ENCODE measurements at regions of chr10 and their contacts with region 1.

Region 1: DNA sequence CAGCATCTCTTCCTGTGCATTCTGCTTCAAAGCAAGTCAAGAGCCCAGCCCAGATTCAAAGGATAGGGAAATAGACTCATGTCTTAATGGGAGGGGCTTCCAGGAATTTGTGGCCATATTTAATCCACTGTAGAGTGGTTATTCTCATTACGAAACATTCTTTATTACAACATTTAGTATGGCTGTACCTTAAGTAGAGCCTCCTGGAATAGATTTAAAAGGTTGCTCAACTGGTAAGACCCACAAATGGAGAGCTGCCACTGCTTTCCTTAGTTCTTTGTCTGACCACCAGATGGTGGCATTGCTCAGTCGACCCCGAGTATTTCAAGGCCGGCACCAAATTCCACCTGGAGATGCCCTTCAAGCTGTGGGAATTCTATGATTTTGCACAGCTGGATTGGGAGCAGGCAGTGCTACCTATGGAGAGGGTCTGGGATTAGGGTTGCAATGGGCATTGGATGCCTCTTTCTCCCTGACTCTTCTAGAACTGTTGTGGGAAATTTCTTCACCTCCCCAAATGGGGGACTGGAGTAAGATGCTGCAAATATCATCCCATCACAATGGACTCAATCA is 102.2 kb downstream of the RBM20 start:
- DNase-seq: peak; percentile 61
- H3K4me3 Mint-ChIP-seq: no peak overlapping the region
- H3K27ac Mint-ChIP-seq: no peak overlapping the region
- H3K4me1 Mint-ChIP-seq: peaks cover 70% of the 10 kb centered on the region
- H3K27me3 Mint-ChIP-seq: peaks cover 4% of the 10 kb centered on the region

Region 2: DNA sequence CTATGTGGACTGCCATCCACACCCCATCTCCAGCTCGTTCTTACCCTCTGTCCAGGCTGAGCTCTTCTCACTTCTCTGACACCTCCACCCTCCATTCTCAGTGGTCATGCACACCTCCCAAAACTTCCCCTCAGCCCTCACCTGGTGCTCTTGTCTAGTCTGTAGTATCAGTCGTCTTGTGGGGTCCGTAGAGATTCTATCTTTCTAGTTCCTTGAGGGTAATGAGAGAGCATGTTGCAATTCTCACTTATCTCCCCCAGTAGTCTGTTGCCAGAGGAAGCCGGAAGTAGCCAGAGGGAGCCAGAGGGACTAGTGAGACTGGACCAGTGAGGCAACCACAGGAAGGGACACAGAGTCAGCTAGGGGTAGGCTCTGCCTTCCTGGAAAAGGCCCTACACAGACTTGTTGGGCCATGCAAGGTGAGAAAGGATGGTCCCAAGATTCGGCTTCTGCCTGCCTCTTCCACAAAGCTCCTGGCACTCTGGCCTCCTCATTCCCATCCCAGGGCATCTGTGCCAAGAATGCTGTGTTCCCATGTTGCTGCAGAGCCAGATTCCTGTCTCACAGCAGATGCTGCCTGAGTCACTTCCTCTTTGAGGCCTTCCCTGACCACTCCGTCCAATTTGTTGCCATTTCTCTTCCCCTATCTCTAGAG is 299.3 kb before region 1 on chr10:
- CTCF ChIA-PET with region 1: no interaction called
- DNase-seq: no peak
- H3K4me3 Mint-ChIP-seq: no peak overlapping the region
- H3K27ac Mint-ChIP-seq: no peak overlapping the region
- H3K4me1 Mint-ChIP-seq: peaks cover 3% of the 10 kb centered on the region
- H3K27me3 Mint-ChIP-seq: peaks cover 46% of the 10 kb centered on the region

Region 3: GRCh38 chr10:110567201-110568054 is 178.9 kb before region 1 on chr10 and contains the start of gene SMC3:
- CTCF ChIA-PET with region 1: no interaction called
- DNase-seq: peak; percentile 94
- H3K4me3 Mint-ChIP-seq: peak within 1 kb of the TSS; percentile 98
- H3K27ac Mint-ChIP-seq: peak within 1 kb of the TSS; percentile 98
- H3K4me1 Mint-ChIP-seq: peaks cover 44% of the 10 kb centered on the region
- H3K27me3 Mint-ChIP-seq: peaks cover 25% of the 10 kb centered on the region

Region 4: GRCh38 chr10:110733218-110733952 is 13.0 kb before region 1 on chr10:
- CTCF ChIA-PET with region 1: no interaction called
- DNase-seq: no peak
- H3K4me3 Mint-ChIP-seq: no peak overlapping the region
- H3K27ac Mint-ChIP-seq: no peak overlapping the region
- H3K4me1 Mint-ChIP-seq: peaks cover 6% of the 10 kb centered on the region
- H3K27me3 Mint-ChIP-seq: peaks cover 42% of the 10 kb centered on the region

Region 5: GRCh38 chr10:110893559-110894179 is 147.3 kb after region 1 on chr10:
- CTCF ChIA-PET with region 1: interaction called, 52 read pairs
- DNase-seq: no peak
- H3K4me3 Mint-ChIP-seq: no peak overlapping the region
- H3K27ac Mint-ChIP-seq: no peak overlapping the region
- H3K4me1 Mint-ChIP-seq: peaks cover 5% of the 10 kb centered on the region
- H3K27me3 Mint-ChIP-seq: no peaks in the 10 kb centered on the region

Region 6: DNA sequence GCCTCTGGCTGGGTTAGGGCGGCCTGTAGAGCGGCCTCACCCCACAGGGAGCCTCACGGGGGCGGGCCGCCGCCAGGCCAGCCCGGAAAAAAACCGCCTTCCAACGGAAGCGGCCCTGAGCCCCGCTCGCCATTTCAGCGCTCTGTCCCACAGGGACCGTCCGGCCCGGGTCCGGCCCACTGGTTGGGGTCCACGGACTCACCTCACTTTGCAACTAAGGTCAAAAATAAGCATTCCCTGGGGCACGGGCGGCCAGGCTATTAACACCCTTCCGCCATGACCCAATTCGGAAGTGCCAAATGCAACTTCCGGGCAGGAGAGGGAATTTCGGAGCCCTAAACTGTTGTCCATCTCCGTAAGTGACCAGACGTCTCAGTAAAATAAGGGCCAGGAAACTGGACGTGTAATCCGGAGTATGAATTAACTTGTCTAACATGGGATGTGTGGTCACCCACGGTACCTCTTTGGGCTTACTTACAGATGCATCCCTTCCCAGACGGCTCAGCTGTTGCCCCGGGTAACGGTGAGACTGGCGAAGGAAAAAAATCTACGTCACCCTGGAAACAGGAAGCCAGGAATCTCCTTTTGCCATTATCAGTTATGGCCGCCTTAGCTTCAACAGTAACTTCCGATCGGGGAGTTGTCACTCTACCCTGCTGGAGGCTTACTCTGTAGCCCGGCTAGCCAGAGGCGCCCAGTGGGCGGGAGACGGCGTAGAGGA is 172.5 kb after region 1 on chr10 and contains the start of gene BBIP1:
- CTCF ChIA-PET with region 1: interaction called, 10 read pairs
- DNase-seq: no peak
- H3K4me3 Mint-ChIP-seq: peak within 1 kb of the TSS; percentile 91
- H3K27ac Mint-ChIP-seq: peak within 1 kb of the TSS; percentile 98
- H3K4me1 Mint-ChIP-seq: peaks cover 38% of the 10 kb centered on the region
- H3K27me3 Mint-ChIP-seq: no peaks in the 10 kb centered on the region

Region 7: DNA sequence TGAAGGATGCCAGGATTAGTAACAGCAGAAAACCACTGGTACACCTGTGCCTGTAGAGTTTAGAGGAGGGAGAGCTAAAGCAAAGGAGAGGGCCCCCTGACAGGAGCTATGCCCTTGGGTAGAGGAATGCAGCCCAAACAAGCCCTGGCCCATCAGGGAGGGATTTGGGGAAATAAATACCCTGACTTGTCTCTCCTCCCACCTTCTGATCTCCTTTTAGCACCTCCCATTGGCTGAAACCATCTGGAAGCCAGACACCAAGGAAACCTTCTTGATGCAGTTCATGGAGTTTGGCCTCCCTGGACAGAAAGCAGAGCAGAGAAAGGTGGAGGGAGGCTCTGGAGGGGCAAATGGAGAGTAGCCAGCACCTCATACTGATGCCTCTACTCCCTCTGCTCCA is 375.8 kb after region 1 on chr10:
- CTCF ChIA-PET with region 1: no interaction called
- DNase-seq: no peak
- H3K4me3 Mint-ChIP-seq: no peak overlapping the region
- H3K27ac Mint-ChIP-seq: no peak overlapping the region
- H3K4me1 Mint-ChIP-seq: no peaks in the 10 kb centered on the region
- H3K27me3 Mint-ChIP-seq: peaks cover 13% of the 10 kb centered on the region